ENCODE measurements at regions of chr2 and their contacts with region 1.

Region 1: DNA sequence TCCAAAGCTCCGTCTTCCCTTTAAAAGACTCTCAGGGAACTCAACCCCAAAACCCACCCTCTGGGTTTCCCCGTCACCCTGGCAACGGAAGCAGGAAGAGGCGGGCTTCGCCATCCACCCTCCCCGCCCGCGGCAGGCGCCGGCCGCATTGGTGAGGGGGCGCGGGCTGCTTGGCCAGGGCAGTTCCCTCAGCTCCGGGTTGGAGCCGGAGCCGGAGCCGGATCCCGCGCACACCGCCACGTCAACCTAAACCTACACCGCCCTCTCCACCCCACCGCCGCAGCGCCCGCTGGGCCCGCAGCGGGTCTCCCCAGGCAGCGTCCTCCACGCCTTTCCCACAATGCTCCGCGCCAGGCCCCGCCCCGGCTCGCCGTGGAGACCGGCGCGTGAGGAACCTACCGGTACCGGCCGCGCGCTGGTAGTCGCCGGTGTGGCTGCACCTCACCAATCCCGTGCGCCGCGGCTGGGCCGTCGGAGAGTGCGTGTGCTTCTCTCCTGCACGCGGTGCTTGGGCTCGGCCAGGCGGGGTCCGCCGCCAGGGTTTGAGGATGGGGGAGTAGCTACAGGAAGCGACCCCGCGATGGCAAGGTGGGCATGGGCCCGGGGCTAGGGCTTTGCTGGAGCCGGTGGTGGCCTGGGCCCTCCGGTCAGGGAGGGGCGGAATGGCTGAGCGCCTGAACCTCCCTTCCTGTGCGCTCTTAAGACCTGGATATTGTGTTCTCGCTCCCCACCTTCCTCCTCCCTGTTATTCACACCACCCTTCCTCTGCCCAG is at the start of gene DNAJC10:
- DNase-seq: peak; percentile 70 to 94
- H3K4me3 ChIP-seq: peak within 1 kb of the TSS; percentile 82 to 91
- H3K27ac ChIP-seq: peak within 1 kb of the TSS; percentile 86 to 90
- H3K4me1 ChIP-seq: peaks cover 0 to 4% of the 10 kb centered on the region in 2 donors
- H3K27me3 ChIP-seq: no peaks in the 10 kb centered on the region
- CTCF ChIP-seq: no peak
- total RNA-seq, gene DNAJC10: 26.0 TPM

Region 2: DNA sequence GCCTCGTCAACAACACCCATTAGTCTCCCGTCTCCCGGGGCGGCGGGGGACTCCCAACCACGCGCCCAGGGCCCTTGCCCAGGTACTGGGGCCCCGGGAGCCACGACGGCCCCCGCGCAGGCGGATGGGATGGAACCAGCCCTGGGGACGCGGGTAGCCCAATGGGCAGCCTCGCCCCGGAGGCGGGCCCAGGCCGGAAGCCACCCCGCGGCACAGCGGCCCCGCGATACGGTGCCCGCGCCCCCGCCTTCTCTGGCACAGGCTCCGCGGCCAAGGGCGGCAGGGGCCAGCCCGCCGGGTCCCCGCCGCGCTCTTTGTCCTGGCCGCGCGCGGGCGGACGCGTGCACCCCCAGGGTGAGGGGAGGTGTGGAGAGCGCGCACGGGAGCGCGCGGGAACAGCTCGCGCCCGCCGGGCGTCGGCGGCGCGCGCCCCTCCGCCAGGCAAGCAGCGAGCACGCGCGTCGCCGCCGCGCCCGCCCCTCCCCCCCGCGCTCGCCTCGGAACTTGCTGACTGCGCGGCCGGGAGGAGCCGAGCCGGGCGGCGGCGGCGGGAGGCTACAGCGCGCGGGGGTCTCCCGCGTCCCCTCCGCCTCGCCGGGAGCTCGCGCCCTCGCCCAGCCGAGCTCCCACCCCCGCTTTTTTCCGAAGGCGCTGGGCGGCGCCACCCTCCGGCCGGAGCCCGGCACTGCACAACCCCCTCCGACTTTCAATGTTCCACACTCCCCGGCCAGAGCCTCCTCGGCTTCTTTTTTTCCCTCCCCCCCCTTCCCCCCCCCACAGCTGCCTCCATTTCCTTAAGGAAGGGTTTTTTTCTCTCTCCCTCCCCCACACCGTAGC is 1735.8 kb before region 1 on chr2 and contains the start of gene UBE2E3:
- intact Hi-C with region 1: loop called (anchors 10 kb)
- DNase-seq: peak; percentile 14 to 89
- H3K4me3 ChIP-seq: peak within 1 kb of the TSS; percentile 72 to 76
- H3K27ac ChIP-seq: peak within 1 kb of the TSS; percentile 94 to 95
- H3K4me1 ChIP-seq: peaks cover 0 to 32% of the 10 kb centered on the region in 2 donors
- H3K27me3 ChIP-seq: no peaks in the 10 kb centered on the region
- CTCF ChIP-seq: peak; percentile 69 to 81 (median 79)
- total RNA-seq, gene UBE2E3: 125 TPM

Region 3: GRCh38 chr2:182372661-182373060 is 343.4 kb before region 1 on chr2:
- intact Hi-C with region 1: no loop called
- DNase-seq: peak in 1 of 2 donors; percentile 85
- H3K4me3 ChIP-seq: no peak overlapping the region
- H3K27ac ChIP-seq: peak overlapping the region; percentile 82 to 91
- H3K4me1 ChIP-seq: peaks cover 0 to 36% of the 10 kb centered on the region in 2 donors
- H3K27me3 ChIP-seq: no peaks in the 10 kb centered on the region
- CTCF ChIP-seq: no peak

Region 4: DNA sequence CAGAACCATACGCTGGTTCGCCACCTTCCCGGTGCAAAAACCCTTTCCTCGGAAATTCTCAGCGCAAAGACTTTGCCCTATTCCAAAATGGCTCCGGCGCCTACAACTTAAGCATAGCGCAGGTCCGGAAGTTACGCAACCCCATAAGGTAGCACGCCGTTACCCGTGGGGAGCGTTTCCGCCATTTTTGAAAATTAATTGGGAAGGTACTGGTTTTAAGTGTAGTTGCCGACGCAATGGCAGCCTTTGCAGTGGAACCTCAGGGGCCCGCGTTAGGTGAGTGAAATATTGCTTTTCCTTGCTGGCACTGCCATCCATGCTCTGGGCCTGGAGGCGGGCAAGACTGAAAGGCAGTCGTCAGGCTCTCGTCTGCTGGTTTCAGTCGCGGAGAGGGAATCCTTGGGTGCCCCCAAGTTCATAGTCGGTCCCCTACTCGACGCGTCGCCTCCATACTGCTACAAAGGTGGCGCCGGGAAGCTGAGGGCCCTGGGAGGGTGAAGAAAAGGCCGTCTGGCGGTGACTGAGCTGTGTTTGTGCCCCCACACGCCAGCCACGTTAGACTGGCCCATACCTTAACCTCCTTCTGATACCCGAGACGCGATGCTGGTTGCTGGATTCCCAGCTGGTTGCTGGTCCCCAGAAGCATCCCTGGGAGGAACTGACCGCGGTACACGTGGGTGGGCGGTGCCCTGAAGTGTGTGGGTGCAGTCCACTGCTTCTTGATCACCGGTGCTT is 408.3 kb after region 1 on chr2 and contains the start of gene NUP35:
- intact Hi-C with region 1: loop called (anchors 2 kb)
- DNase-seq: peak; percentile 43 to 93
- H3K4me3 ChIP-seq: peak within 1 kb of the TSS; percentile 81 to 94
- H3K27ac ChIP-seq: peak within 1 kb of the TSS; percentile 87
- H3K4me1 ChIP-seq: peaks cover 0 to 7% of the 10 kb centered on the region in 2 donors
- H3K27me3 ChIP-seq: no peaks in the 10 kb centered on the region
- CTCF ChIP-seq: no peak
- total RNA-seq, gene NUP35: not detected